Mammary epithelial cell (primary cell): ENCODE measurements at regions of chr5 and their contacts with region 1.

Region 1: GRCh38 chr5:181207214-181208107 is 2.5 kb upstream of the TRIM7 start:
- DNase-seq: peak; percentile 91
- H3K4me3 ChIP-seq: peak overlapping the region; percentile 48 to 61 (median 61)
- H3K27ac ChIP-seq: peak overlapping the region; percentile 52
- H3K4me1 ChIP-seq: peaks cover 22% of the 10 kb centered on the region
- H3K27me3 ChIP-seq: no peaks in the 10 kb centered on the region
- CTCF ChIP-seq: no peak

Region 2: DNA sequence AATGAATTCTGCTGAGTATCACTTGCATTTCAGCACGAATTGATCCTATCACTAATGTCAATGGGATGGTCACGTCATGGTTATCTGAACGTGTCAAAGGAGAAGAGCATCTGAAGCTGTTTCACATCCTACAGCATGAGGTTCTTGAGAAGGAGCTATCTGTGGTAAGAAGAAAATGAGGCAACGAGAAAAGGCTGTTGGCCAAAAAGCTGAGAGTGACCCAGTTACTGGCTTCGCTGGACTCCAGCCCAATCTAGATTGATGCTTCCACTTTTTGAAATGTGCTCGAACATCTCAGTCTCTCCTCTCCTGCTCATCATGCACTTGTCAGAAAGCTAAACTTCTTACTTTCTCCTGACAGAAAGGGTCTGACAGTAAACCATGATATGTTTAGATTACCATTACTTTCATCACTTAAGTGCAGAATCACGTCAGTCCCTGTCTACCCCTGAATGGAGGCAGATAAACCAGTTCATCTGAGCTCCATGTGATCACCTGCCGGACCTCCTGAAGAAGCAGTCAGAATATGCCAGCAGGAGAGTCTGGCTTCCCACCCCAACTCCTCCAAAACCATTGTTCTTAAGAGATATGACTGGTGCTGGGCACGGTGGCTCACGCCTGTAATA is 427.4 kb before region 1 on chr5:
- CTCF ChIA-PET with region 1: no interaction called
- dilution Hi-C with region 1: no loop called
- in situ Hi-C with region 1: no loop called
- intact Hi-C with region 1: no loop called
- DNase-seq: no peak
- H3K4me3 ChIP-seq: no peak overlapping the region
- H3K27ac ChIP-seq: no peak overlapping the region
- H3K4me1 ChIP-seq: peaks cover 1% of the 10 kb centered on the region
- H3K27me3 ChIP-seq: no peaks in the 10 kb centered on the region
- CTCF ChIP-seq: no peak

Region 3: DNA sequence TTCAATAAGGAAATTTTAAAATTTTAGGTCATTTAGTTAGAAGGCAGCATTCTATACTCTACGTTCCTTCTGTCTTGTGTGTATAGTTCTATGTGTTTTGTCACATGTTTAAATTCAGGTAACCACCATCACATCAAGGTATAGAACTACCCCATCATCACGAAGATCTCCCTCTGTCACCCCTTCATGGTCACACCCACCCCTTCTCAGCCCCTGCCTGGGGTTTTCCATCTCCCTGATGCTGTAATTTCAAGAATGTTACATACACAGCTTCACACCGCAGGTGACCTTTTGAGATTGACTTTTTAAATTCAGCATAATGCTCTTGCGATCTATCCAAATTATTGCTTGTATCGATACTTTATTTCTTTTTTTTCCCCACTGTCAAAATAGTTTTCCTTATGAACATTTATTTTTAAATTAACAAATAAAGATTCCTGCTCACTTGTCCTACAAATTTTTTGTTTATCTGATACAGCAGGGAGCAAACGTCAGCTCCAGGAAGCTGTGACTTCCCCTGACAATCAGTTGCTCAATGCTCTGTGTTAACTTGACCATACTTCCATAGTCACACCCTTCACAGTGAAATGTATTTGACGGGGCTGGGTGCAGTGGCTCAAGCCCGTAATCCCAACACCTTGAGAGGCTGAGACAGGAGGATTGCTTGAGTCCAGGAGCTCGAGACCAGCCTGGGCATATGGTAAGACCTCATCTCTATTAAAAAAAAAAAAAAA is 298.3 kb before region 1 on chr5:
- CTCF ChIA-PET with region 1: no interaction called
- dilution Hi-C with region 1: no loop called
- in situ Hi-C with region 1: no loop called
- intact Hi-C with region 1: no loop called
- DNase-seq: no peak
- H3K4me3 ChIP-seq: no peak overlapping the region
- H3K27ac ChIP-seq: no peak overlapping the region
- H3K4me1 ChIP-seq: no peaks in the 10 kb centered on the region
- H3K27me3 ChIP-seq: no peaks in the 10 kb centered on the region
- CTCF ChIP-seq: no peak

Region 4: GRCh38 chr5:181088289-181088688 is 119.2 kb before region 1 on chr5:
- CTCF ChIA-PET with region 1: no interaction called
- dilution Hi-C with region 1: no loop called
- in situ Hi-C with region 1: no loop called
- intact Hi-C with region 1: no loop called
- DNase-seq: no peak
- H3K4me3 ChIP-seq: no peak overlapping the region
- H3K27ac ChIP-seq: no peak overlapping the region
- H3K4me1 ChIP-seq: no peaks in the 10 kb centered on the region
- H3K27me3 ChIP-seq: no peaks in the 10 kb centered on the region
- CTCF ChIP-seq: peak; percentile 37 to 46

Region 5: DNA sequence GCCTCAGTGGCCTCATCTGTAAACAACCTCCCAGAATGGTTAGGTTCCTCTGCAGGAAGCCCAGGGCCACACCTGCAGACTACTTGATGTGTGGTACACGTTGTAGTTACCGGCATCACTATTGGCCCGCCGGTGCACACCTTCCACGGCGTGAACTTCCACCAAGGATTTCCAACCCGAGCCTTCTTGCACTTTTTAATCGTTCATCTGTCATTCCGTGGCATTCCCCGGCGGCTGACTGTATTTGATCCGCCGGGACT is 10.3 kb after region 1 on chr5:
- CTCF ChIA-PET with region 1: no interaction called
- dilution Hi-C with region 1: no loop called
- in situ Hi-C with region 1: no loop called
- intact Hi-C with region 1: loop called (anchors 1 kb)
- DNase-seq: no peak
- H3K4me3 ChIP-seq: peak overlapping the region; percentile 18 to 53 (median 46)
- H3K27ac ChIP-seq: no peak overlapping the region
- H3K4me1 ChIP-seq: peaks cover 15% of the 10 kb centered on the region
- H3K27me3 ChIP-seq: peaks cover 2% of the 10 kb centered on the region
- CTCF ChIP-seq: no peak

Region 6: DNA sequence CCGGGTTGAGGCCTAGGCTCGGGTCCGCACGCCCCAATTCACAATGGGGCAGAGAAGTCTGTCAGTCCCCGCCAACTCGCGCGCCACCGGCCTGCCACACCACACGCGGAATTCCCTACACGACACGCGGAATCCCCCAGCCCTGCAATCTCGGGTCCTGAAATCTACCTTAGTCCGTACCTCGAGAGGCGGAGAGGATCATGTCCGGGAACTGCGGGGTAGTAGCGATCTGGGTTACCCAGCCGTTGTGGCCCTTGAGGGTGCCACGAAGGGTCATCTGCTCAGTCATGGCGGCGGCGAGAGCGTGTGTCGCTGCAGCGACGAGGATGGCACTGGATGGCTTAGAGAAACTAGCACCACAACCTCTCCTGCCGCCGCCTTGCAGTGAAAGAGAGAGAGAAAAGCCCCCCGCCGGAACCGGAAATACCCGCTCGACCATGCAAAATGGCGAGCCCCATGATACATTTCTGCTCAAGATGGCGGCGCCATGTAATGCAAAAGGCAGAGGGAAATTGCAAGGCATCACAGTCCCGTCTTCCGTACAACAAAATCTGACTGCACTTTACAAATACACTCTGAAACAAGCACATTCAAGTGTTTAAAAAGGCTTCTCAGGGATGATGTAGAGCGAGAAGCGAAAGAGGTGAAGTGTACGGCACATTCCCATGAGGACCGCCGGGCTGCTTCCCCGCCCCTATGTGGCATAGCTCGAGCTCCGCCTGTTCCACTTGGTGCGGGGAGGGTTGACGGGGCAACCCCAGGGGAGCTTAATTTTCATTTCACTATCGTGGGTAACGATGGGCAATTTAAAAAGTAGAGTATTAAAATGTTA is 36.3 kb after region 1 on chr5 and contains the start of gene RACK1:
- CTCF ChIA-PET with region 1: no interaction called
- dilution Hi-C with region 1: no loop called
- in situ Hi-C with region 1: no loop called
- intact Hi-C with region 1: loop called (anchors 1 kb)
- DNase-seq: peak; percentile 86
- H3K4me3 ChIP-seq: peak within 1 kb of the TSS; percentile 96 to 100 (median 98)
- H3K27ac ChIP-seq: peak within 1 kb of the TSS; percentile 84
- H3K4me1 ChIP-seq: peaks cover 35% of the 10 kb centered on the region
- H3K27me3 ChIP-seq: no peaks in the 10 kb centered on the region
- CTCF ChIP-seq: no peak
- total RNA-seq, gene RACK1: 2,031 to 4,986 TPM